ENCODE measurements at regions of chr5 and their contacts with region 1.

Region 1: DNA sequence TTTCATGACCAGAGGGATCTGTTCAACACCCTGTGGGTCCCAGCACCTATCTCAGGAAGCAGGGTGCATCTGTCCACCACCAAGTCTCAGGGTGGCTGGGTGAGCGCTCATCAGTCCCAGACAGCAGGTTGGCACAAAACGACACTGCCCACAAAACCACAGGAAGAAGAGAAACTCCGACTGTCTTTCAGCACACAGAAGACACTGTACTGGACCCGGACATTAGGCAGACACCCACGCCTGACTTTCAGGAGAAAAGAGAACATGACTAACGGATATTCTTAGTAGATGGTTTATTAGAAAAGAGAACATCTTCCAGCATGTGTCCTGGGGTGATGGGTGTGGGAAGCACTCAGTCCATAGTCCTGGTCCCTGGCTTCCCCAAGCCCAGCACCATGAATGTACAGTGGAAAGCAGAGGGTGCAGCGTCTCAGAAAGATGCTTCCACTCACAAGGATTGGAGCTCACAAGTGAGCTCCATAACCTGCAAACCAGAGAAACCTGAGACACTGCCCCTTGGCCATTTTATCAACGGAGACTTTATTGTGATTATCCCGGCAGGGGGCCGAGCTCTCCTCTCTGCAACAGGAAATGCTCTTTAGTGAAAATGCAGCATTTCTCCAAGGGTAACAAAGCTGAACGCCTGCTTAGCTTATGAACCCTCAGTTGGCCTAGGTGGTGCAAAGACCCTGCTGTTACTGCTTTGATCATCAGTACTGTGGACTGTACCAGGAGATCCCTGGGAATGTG is 35.8 kb upstream of the LCP2 start:
- DNase-seq: peak; percentile 41
- H3K4me3 Mint-ChIP-seq: peak overlapping the region; percentile 76
- H3K27ac Mint-ChIP-seq: no peak overlapping the region
- H3K4me1 Mint-ChIP-seq: peaks cover 8% of the 10 kb centered on the region
- H3K27me3 Mint-ChIP-seq: peaks cover 2% of the 10 kb centered on the region

Region 2: GRCh38 chr5:168836603-168837231 is 1496.6 kb before region 1 on chr5:
- intact Hi-C with region 1: loop called (anchors 5 kb)
- DNase-seq: no peak
- H3K4me3 Mint-ChIP-seq: peak overlapping the region; percentile 28
- H3K27ac Mint-ChIP-seq: peak overlapping the region; percentile 23
- H3K4me1 Mint-ChIP-seq: peaks cover 15% of the 10 kb centered on the region
- H3K27me3 Mint-ChIP-seq: peaks cover 7% of the 10 kb centered on the region

Region 3: GRCh38 chr5:170253844-170254455 is 79.4 kb before region 1 on chr5:
- intact Hi-C with region 1: loop called (anchors 1 kb)
- DNase-seq: peak; percentile 68
- H3K4me3 Mint-ChIP-seq: peak overlapping the region; percentile 13
- H3K27ac Mint-ChIP-seq: peak overlapping the region; percentile 66
- H3K4me1 Mint-ChIP-seq: peaks cover 62% of the 10 kb centered on the region
- H3K27me3 Mint-ChIP-seq: no peaks in the 10 kb centered on the region

Region 4: GRCh38 chr5:170293273-170293672 is 40.1 kb before region 1 on chr5:
- intact Hi-C with region 1: loop called (anchors 1 kb)
- DNase-seq: no peak
- H3K4me3 Mint-ChIP-seq: peak overlapping the region; percentile 99
- H3K27ac Mint-ChIP-seq: peak overlapping the region; percentile 87
- H3K4me1 Mint-ChIP-seq: peaks cover 79% of the 10 kb centered on the region
- H3K27me3 Mint-ChIP-seq: no peaks in the 10 kb centered on the region

Region 5: GRCh38 chr5:170312666-170313065 is 20.7 kb before region 1 on chr5:
- intact Hi-C with region 1: loop called (anchors 1 kb)
- DNase-seq: peak; percentile 61
- H3K4me3 Mint-ChIP-seq: peak overlapping the region; percentile 80
- H3K27ac Mint-ChIP-seq: peak overlapping the region; percentile 91
- H3K4me1 Mint-ChIP-seq: peaks cover 54% of the 10 kb centered on the region
- H3K27me3 Mint-ChIP-seq: no peaks in the 10 kb centered on the region

Region 6: GRCh38 chr5:170805666-170806065 is 472.3 kb after region 1 on chr5:
- intact Hi-C with region 1: no loop called
- DNase-seq: no peak
- H3K4me3 Mint-ChIP-seq: no peak overlapping the region
- H3K27ac Mint-ChIP-seq: no peak overlapping the region
- H3K4me1 Mint-ChIP-seq: no peaks in the 10 kb centered on the region
- H3K27me3 Mint-ChIP-seq: no peaks in the 10 kb centered on the region